ENCODE measurements at regions of chr1 and their contacts with region 1.

Region 1: GRCh38 chr1:110990536-110990935 is 26.8 kb upstream of the LRIF1 start:
- DNase-seq: no peak
- ATAC-seq: no peak
- H3K4me3 ChIP-seq: no peak overlapping the region
- H3K4me3 Mint-ChIP-seq: no peak overlapping the region
- H3K27ac ChIP-seq: no peak overlapping the region
- H3K27ac Mint-ChIP-seq: no peak overlapping the region
- H3K4me1 ChIP-seq: no peaks in the 10 kb centered on the region
- H3K4me1 Mint-ChIP-seq: peaks cover 5% of the 10 kb centered on the region
- H3K27me3 ChIP-seq: no peaks in the 10 kb centered on the region
- H3K27me3 Mint-ChIP-seq: peaks cover 4% of the 10 kb centered on the region
- CTCF ChIP-seq: no peak

Region 2: DNA sequence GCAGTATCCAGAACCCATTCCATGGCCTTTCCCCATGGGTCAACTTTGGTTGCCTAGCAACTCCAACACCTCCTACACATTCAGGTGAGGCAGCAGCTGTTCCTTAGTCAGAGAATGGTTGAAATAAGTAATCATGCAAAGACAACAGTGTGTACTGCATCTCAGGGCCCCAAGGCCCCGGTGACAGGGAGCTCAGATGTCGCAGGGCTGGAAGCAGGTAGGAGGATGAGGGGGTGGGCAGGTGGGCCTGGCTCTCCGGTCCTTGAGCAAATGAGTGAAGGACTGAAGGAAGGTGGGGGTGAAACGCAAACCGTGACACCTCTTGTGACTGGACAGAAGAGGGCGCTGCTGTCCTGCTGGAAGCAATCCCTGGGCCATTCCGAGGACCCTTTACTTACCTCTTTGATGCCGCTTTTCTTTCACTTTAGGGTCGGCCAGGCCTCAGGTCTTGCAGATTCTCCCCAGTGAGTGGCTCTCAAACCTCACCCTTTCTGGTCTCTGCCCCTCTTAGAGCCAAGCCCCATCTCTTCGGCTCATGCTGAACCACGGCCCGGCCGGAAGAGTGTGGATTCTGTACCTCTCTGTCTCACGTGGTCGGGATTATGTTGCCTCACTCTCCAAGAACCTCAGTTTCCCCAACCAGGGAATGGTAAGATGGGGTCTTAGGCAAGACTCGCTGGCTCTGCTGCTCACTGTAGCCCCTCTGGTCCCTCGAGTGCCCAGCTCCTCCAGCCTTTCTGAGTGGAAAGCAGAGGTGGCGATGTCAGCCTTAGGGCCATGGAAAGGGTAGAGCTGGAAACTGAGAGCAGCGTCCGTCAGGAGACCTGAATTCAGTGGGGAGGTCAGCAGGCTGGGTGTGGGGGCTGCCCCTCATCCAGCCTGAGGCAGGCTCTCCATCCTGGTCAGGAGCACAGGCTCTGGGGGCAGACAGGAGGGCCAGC is 466.0 kb before region 1 on chr1:
- CTCF ChIA-PET with region 1: no interaction called
- POLR2A ChIA-PET with region 1: no interaction called
- intact Hi-C with region 1: loop called in 1 of 2 experiments (anchors 2 kb)
- DNase-seq: peak; percentile 11 to 76 (median 30)
- ATAC-seq: peak; percentile 66
- H3K4me3 ChIP-seq: no peak overlapping the region
- H3K4me3 Mint-ChIP-seq: no peak overlapping the region
- H3K27ac ChIP-seq: no peak overlapping the region
- H3K27ac Mint-ChIP-seq: no peak overlapping the region
- H3K4me1 ChIP-seq: peaks cover 8% of the 10 kb centered on the region
- H3K4me1 Mint-ChIP-seq: no peaks in the 10 kb centered on the region
- H3K27me3 ChIP-seq: peaks cover 0 to 10% of the 10 kb centered on the region in 2 experiments
- H3K27me3 Mint-ChIP-seq: peaks cover 38% of the 10 kb centered on the region
- CTCF ChIP-seq: peak; percentile 58

Region 3: DNA sequence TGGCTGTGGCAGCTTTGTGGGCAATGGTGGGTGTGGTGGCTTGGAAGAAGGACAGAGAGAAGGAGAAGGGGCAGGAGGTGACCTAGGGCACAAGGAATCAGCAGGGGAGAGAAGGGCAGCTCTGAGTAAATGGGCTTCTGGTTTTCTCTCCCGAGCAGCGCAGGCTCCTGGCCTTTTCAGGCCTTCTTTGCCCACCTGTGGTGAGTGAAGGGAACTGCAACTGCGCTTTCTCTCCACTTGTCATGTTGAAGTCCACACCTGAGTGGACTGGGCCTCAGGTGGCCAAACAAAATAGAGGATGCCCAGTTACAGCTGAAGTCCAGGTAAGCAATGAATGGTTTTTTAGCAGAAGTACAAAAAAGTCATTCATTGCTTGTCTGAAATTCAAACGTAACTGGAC is 442.2 kb before region 1 on chr1:
- CTCF ChIA-PET with region 1: no interaction called
- POLR2A ChIA-PET with region 1: no interaction called
- intact Hi-C with region 1: loop called in 1 of 2 experiments (anchors 10 kb)
- DNase-seq: no peak
- ATAC-seq: no peak
- H3K4me3 ChIP-seq: no peak overlapping the region
- H3K4me3 Mint-ChIP-seq: no peak overlapping the region
- H3K27ac ChIP-seq: no peak overlapping the region
- H3K27ac Mint-ChIP-seq: no peak overlapping the region
- H3K4me1 ChIP-seq: no peaks in the 10 kb centered on the region
- H3K4me1 Mint-ChIP-seq: no peaks in the 10 kb centered on the region
- H3K27me3 ChIP-seq: peaks cover 12 to 24% of the 10 kb centered on the region in 2 experiments
- H3K27me3 Mint-ChIP-seq: peaks cover 45% of the 10 kb centered on the region
- CTCF ChIP-seq: peak; percentile 18

Region 4: DNA sequence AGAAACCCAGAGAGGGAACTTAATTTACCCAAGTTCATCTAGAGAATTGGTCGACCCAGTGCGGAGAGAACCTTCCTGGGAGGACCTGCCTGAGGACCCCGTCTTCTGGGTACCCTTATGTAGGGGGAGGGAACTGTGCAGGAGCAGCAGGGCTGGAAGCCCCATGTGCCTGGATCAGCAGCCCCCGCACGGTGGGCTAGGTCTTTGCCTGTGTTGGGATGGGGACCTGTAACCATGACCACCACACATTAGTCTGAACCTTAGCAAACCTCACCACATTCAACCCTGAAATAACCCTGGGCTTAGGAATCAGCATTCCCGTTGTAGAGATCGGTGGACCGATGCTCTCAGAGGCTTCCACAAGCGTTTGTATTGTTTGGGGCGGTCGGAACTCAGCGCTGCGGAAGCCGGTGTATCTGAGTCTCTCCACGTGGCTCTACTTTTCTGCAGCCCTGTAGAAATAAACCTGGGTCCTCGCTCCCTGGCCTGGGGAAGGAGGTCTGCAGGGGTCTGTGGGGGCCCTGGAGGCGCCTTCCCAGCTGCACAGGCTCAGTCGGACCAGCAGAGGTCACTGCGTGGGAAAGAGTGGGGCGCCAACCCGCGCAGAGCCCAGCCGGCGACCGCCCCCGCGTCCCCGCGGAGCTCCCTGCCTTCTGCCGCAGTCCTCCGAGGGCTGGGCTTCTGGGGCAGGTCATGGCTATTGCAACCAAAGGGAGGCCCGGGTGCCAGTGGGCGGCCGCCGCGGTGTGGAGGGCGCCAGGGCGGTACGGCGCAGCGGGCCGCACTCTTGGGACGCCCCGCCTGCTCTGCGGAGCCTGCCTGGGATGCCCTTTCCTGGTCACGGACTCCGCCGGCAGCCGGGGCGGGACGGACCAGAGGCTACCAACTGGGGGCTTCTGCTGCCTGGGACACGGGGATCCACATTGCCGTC is 435.4 kb before region 1 on chr1:
- CTCF ChIA-PET with region 1: no interaction called
- POLR2A ChIA-PET with region 1: no interaction called
- intact Hi-C with region 1: loop called in 1 of 2 experiments (anchors 2 kb)
- DNase-seq: peak; percentile 27 to 77 (median 46)
- ATAC-seq: peak; percentile 94
- H3K4me3 ChIP-seq: no peak overlapping the region
- H3K4me3 Mint-ChIP-seq: no peak overlapping the region
- H3K27ac ChIP-seq: no peak overlapping the region
- H3K27ac Mint-ChIP-seq: no peak overlapping the region
- H3K4me1 ChIP-seq: peaks cover 11% of the 10 kb centered on the region
- H3K4me1 Mint-ChIP-seq: no peaks in the 10 kb centered on the region
- H3K27me3 ChIP-seq: peaks cover 34 to 62% of the 10 kb centered on the region in 2 experiments
- H3K27me3 Mint-ChIP-seq: peaks cover 72% of the 10 kb centered on the region
- CTCF ChIP-seq: peak; percentile 77

Region 5: GRCh38 chr1:111769517-111770146 is 779.1 kb after region 1 on chr1:
- CTCF ChIA-PET with region 1: no interaction called
- POLR2A ChIA-PET with region 1: no interaction called
- intact Hi-C with region 1: no loop called
- DNase-seq: peak in 12 of 14 experiments; percentile 11 to 84 (median 42)
- ATAC-seq: peak; percentile 68
- H3K4me3 ChIP-seq: no peak overlapping the region
- H3K4me3 Mint-ChIP-seq: no peak overlapping the region
- H3K27ac ChIP-seq: no peak overlapping the region
- H3K27ac Mint-ChIP-seq: peak overlapping the region; percentile 40
- H3K4me1 ChIP-seq: no peaks in the 10 kb centered on the region
- H3K4me1 Mint-ChIP-seq: peaks cover 9% of the 10 kb centered on the region
- H3K27me3 ChIP-seq: no peaks in the 10 kb centered on the region
- H3K27me3 Mint-ChIP-seq: no peaks in the 10 kb centered on the region
- CTCF ChIP-seq: peak; percentile 82